MCF 10A (cell line): ENCODE measurements at regions of chr9 and their contacts with region 1.

Region 1: GRCh38 chr9:93453047-93453914 is at the start of gene FAM120AOS:
- DNase-seq: peak; percentile 96
- H3K4me3 Mint-ChIP-seq: peak within 1 kb of the TSS; percentile 86
- H3K27ac Mint-ChIP-seq: peak within 1 kb of the TSS; percentile 93
- H3K4me1 Mint-ChIP-seq: peaks cover 36% of the 10 kb centered on the region
- H3K27me3 Mint-ChIP-seq: no peaks in the 10 kb centered on the region
- CTCF ChIP-seq: no peak
- total RNA-seq, gene FAM120AOS: 47.4 and 50.1 TPM in 2 replicates

Region 2: DNA sequence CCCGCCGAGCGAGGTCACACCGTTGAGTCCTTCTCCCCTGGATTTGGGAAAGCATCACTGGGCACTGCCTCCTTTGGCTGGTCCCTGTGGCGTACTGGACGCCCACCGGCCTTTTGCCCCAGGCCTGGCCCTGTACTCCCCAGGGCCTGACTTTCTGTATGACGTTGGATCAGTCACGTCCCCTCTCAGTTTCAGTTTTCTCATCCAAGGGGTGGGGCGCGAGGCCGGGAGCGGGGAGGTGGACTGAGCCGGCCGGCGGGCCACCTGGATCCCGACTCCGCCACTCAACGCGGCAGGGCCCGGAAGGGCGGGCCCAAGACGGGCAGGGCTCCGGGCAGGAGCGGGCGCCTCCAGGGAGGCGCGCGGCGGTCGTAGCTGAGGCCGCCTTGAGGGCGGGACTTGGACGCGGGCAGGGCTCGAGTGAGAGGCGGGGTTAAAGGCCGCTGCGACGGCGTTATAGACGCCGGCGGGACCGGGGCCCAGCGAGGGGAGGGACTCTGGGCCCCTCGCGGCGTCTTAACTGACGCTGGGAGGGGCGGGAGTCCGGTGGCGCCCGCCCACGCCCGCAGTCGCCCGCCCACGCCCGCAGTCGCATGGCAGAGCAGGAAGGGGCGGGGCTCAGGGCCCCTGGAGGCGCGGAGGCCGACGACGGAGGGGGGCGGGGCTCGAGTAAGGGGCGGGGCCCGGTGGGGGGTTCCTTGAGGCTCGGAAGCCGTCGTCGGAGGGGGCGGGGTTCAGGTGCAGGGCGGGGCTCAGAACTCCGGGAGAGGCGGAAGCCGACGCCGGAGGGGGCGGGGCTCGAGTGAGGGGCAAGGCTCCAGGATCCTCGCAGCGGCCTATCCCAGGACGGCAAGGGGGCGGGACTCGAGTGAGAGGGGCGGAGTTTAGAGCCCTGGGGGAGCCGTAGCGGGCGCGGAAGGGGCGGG is 357.8 kb before region 1 on chr9:
- CTCF ChIA-PET with region 1: no interaction called
- POLR2A ChIA-PET with region 1: interaction called, 13 read pairs
- intact Hi-C with region 1: no loop called
- DNase-seq: peak; percentile 98
- H3K4me3 Mint-ChIP-seq: peak overlapping the region; percentile 78
- H3K27ac Mint-ChIP-seq: peak overlapping the region; percentile 82
- H3K4me1 Mint-ChIP-seq: peaks cover 33% of the 10 kb centered on the region
- H3K27me3 Mint-ChIP-seq: no peaks in the 10 kb centered on the region
- CTCF ChIP-seq: no peak

Region 3: GRCh38 chr9:93223260-93224180 is 229.8 kb before region 1 on chr9:
- CTCF ChIA-PET with region 1: no interaction called
- POLR2A ChIA-PET with region 1: no interaction called
- intact Hi-C with region 1: no loop called
- DNase-seq: peak; percentile 96
- H3K4me3 Mint-ChIP-seq: no peak overlapping the region
- H3K27ac Mint-ChIP-seq: no peak overlapping the region
- H3K4me1 Mint-ChIP-seq: peaks cover 22% of the 10 kb centered on the region
- H3K27me3 Mint-ChIP-seq: no peaks in the 10 kb centered on the region
- CTCF ChIP-seq: no peak

Region 4: DNA sequence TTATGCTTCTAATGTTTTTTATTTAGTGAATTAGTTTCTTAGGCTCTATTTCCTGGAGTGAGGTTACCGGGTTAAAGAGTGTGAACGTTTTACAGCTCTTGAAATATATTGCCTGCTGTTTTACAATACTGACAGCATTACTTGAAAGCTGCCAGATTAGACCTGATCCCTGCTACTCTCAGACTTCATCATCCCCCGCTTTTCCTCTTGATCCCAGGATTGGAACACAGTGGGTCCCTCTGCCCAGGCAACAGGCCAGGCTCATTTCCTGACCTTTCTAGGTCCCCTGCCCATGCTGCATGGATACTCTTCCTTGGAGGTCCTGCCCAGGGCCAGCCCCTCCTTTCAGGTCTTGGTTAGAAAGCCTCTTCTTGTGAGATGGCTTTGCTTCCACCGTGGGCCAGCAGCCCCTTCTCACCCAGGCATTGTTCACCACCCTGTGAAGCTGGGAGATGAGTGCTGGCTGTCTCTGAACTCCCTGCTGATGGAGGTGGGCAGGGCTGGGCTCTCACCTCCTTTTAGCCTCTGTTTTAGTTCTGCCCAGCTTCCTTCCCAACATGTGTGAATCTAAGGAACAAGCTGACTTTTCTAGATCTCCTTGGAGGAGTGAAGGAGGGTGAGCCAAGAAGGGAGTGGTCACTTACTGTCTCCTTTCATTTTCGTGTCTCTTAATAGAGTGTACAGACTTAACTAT is 15.6 kb after region 1 on chr9:
- CTCF ChIA-PET with region 1: interaction called, 7 read pairs
- POLR2A ChIA-PET with region 1: interaction called, 93 read pairs
- intact Hi-C with region 1: no loop called
- DNase-seq: peak; percentile 35
- H3K4me3 Mint-ChIP-seq: peak overlapping the region; percentile 7
- H3K27ac Mint-ChIP-seq: peak overlapping the region; percentile 80
- H3K4me1 Mint-ChIP-seq: peaks cover 50% of the 10 kb centered on the region
- H3K27me3 Mint-ChIP-seq: no peaks in the 10 kb centered on the region
- CTCF ChIP-seq: no peak

Region 5: GRCh38 chr9:93501406-93501805 is 48.1 kb after region 1 on chr9:
- CTCF ChIA-PET with region 1: interaction called, 3 read pairs
- POLR2A ChIA-PET with region 1: interaction called, 18 read pairs
- intact Hi-C with region 1: loop called (anchors 2 kb)
- DNase-seq: no peak
- H3K4me3 Mint-ChIP-seq: peak overlapping the region; percentile 64
- H3K27ac Mint-ChIP-seq: peak overlapping the region; percentile 84
- H3K4me1 Mint-ChIP-seq: peaks cover 47% of the 10 kb centered on the region
- H3K27me3 Mint-ChIP-seq: no peaks in the 10 kb centered on the region
- CTCF ChIP-seq: no peak

Region 6: GRCh38 chr9:93566408-93567270 is 113.4 kb after region 1 on chr9:
- CTCF ChIA-PET with region 1: interaction called, 16 read pairs
- POLR2A ChIA-PET with region 1: interaction called, 50 read pairs
- intact Hi-C with region 1: loop called (anchors 1 kb)
- DNase-seq: peak; percentile 93
- H3K4me3 Mint-ChIP-seq: peak overlapping the region; percentile 69
- H3K27ac Mint-ChIP-seq: peak overlapping the region; percentile 76
- H3K4me1 Mint-ChIP-seq: peaks cover 5% of the 10 kb centered on the region
- H3K27me3 Mint-ChIP-seq: no peaks in the 10 kb centered on the region
- CTCF ChIP-seq: peak; percentile 94